PC-9 (cell line): ENCODE measurements at regions of chr6 and their contacts with region 1.

Region 1: GRCh38 chr6:87667032-87667431 is 35.0 kb downstream of the AKIRIN2 start:
- DNase-seq: no peak
- H3K4me3 ChIP-seq: no peak overlapping the region
- H3K27ac ChIP-seq: no peak overlapping the region
- H3K4me1 ChIP-seq: 0 out of 2 replicates have a peak, but pooled peaks cover 5% of the 10 kb centered on the region
- H3K27me3 ChIP-seq: no peaks in the 10 kb centered on the region
- CTCF ChIP-seq: no peak

Region 2: DNA sequence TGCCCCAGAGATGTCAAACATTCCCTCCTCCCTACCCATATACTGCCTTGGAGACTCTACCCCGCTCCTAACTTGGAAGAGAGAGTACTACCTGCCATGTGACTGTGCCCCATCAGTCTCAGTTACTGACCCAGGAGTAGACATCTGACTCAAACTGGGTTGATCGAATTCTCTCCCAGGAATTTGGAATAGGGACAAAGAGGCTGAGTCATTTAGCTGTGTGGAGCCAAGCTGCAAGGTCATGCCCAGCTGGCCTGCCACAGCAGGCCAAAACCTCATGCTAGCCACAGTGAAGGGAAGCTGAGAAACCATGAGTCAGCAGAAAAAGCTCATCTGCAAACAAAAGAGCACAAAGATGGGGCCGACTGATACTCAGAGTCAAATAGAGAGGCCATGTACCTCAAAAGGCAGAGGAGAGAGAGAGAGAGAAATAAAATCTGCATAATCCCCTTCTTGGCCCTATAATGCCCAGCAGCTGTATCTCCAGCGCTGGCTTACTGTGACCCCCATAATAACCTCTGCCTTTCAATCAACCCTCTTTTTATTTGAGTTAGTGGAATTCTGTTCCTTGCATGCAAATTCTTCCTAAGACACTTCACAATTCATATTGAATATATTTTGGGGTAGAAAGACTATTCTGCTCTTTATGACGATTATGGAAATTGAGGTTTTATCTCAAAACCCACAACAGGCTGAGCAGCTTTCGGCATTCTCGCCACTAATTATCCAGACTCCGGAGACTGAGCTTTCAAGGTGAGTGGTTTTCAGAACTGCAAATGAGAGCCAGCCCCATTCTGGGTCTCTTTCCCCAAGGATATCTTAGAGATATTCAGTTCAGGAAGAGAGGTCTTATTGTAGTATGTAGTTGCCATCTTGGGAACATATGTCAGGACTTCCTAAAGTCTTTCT is 56.4 kb after region 1 on chr6:
- CTCF ChIA-PET with region 1: interaction called, 16 read pairs
- POLR2A ChIA-PET with region 1: no interaction called
- intact Hi-C with region 1: no loop called
- DNase-seq: peak; percentile 78 to 91
- H3K4me3 ChIP-seq: no peak overlapping the region
- H3K27ac ChIP-seq: peak overlapping the region; percentile 74
- H3K4me1 ChIP-seq: peaks cover 36% of the 10 kb centered on the region
- H3K27me3 ChIP-seq: no peaks in the 10 kb centered on the region
- CTCF ChIP-seq: no peak